CD8-positive, alpha-beta T cell (primary cell): ENCODE measurements at regions of chr3 and their contacts with region 1.

Region 1: GRCh38 chr3:172039436-172040077 is at the start of gene FNDC3B:
- DNase-seq: peak; percentile 84 to 95 (median 90)
- ATAC-seq: peak; percentile 93
- H3K4me3 ChIP-seq: peak within 1 kb of the TSS; percentile 88 to 90
- H3K4me3 Mint-ChIP-seq: peak within 1 kb of the TSS; percentile 99
- H3K27ac ChIP-seq: peak within 1 kb of the TSS; percentile 61 to 84
- H3K27ac Mint-ChIP-seq: peak within 1 kb of the TSS; percentile 97
- H3K4me1 ChIP-seq: peaks cover 20% of the 10 kb centered on the region
- H3K4me1 Mint-ChIP-seq: peaks cover 38% of the 10 kb centered on the region
- H3K27me3 ChIP-seq: no peaks in the 10 kb centered on the region
- H3K27me3 Mint-ChIP-seq: peaks cover 2% of the 10 kb centered on the region
- CTCF ChIP-seq: no peak
- total RNA-seq, gene FNDC3B: 13.2 to 14.4 TPM

Region 2: DNA sequence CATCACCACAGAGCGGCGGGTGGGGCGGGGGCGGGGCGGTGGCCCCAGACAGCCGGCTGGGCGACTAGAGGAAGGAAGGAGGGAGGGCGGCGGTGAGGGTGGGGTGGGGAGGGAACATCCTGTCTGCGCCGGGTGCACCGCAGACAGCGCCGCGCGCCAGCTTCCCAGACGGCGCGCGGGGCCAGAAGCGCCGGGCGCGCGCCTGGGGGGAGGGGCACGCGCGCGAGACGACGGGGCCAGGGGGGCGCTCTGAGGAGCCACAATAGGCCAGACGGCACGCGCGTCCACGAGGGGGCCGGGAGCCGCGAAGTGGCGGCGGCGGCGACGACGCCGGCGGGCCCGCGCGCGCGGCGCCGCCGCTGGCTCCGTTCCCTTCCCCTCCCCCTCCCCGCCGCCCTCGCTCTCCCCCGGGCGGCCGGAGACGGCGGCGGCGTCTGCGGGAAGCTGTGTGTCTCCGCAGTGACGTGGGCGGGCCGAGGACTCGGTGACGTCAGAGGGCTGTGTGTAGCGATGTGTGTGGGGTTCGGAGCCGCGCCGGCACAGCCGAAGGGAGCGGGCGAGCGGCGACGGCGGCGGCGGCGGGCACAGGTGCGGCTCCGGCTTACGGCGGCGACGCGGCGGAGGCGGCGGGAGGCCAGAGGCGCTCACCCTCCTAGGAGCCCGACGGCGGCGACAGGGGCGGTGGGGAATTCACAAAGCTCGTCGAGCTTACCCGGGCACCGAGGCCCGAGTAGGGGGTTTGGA is 1682.2 kb before region 1 on chr3 and contains the start of gene SKIL:
- CTCF ChIA-PET with region 1: no interaction called
- POLR2A ChIA-PET with region 1: no interaction called
- intact Hi-C with region 1: loop called in 1 of 2 experiments (anchors 5 kb)
- DNase-seq: peak; percentile 94 to 99 (median 97)
- ATAC-seq: peak; percentile 69
- H3K4me3 ChIP-seq: peak within 1 kb of the TSS; percentile 55 to 76
- H3K4me3 Mint-ChIP-seq: peak within 1 kb of the TSS; percentile 95
- H3K27ac ChIP-seq: peak within 1 kb of the TSS; percentile 91 to 96
- H3K27ac Mint-ChIP-seq: peak within 1 kb of the TSS; percentile 99
- H3K4me1 ChIP-seq: peaks cover 24% of the 10 kb centered on the region
- H3K4me1 Mint-ChIP-seq: peaks cover 52% of the 10 kb centered on the region
- H3K27me3 ChIP-seq: no peaks in the 10 kb centered on the region
- H3K27me3 Mint-ChIP-seq: no peaks in the 10 kb centered on the region
- CTCF ChIP-seq: no peak
- total RNA-seq, gene SKIL: 160 to 177 TPM

Region 3: DNA sequence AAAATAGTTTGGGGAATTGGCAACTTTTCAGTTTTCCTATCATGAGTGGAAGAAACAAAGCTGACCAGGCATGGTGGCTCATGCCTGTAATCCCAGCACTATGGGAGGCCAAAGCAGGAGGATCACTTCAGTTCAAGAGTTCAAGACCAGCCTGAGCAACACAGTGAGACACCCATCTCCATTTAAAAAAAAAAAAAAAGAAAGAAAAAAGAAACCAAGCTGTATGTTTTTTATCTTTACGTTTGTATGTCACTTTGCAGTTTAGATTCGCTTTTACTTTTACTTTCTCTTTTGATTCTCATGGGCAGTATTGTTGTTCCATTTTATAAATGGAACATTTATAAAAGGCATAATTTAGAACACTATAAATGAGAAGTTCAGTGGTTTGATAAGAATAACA is 548.2 kb before region 1 on chr3:
- CTCF ChIA-PET with region 1: no interaction called
- POLR2A ChIA-PET with region 1: no interaction called
- intact Hi-C with region 1: loop called in 1 of 2 experiments (anchors 10 kb)
- DNase-seq: peak in 2 of 9 experiments; percentile 31 to 61
- ATAC-seq: peak; percentile 40
- H3K4me3 ChIP-seq: peak overlapping the region; percentile 25 to 32
- H3K4me3 Mint-ChIP-seq: peak overlapping the region; percentile 50
- H3K27ac ChIP-seq: peak overlapping the region in 1 of 2 experiments; percentile 57
- H3K27ac Mint-ChIP-seq: peak overlapping the region; percentile 66
- H3K4me1 ChIP-seq: peaks cover 39% of the 10 kb centered on the region
- H3K4me1 Mint-ChIP-seq: peaks cover 47% of the 10 kb centered on the region
- H3K27me3 ChIP-seq: no peaks in the 10 kb centered on the region
- H3K27me3 Mint-ChIP-seq: no peaks in the 10 kb centered on the region
- CTCF ChIP-seq: no peak

Region 4: GRCh38 chr3:171851680-171852058 is 187.9 kb before region 1 on chr3:
- CTCF ChIA-PET with region 1: no interaction called
- POLR2A ChIA-PET with region 1: no interaction called
- intact Hi-C with region 1: no loop called
- DNase-seq: no peak
- ATAC-seq: no peak
- H3K4me3 ChIP-seq: no peak overlapping the region
- H3K4me3 Mint-ChIP-seq: no peak overlapping the region
- H3K27ac ChIP-seq: no peak overlapping the region
- H3K27ac Mint-ChIP-seq: no peak overlapping the region
- H3K4me1 ChIP-seq: no peaks in the 10 kb centered on the region
- H3K4me1 Mint-ChIP-seq: peaks cover 1% of the 10 kb centered on the region
- H3K27me3 ChIP-seq: no peaks in the 10 kb centered on the region
- H3K27me3 Mint-ChIP-seq: peaks cover 7% of the 10 kb centered on the region
- CTCF ChIP-seq: no peak

Region 5: DNA sequence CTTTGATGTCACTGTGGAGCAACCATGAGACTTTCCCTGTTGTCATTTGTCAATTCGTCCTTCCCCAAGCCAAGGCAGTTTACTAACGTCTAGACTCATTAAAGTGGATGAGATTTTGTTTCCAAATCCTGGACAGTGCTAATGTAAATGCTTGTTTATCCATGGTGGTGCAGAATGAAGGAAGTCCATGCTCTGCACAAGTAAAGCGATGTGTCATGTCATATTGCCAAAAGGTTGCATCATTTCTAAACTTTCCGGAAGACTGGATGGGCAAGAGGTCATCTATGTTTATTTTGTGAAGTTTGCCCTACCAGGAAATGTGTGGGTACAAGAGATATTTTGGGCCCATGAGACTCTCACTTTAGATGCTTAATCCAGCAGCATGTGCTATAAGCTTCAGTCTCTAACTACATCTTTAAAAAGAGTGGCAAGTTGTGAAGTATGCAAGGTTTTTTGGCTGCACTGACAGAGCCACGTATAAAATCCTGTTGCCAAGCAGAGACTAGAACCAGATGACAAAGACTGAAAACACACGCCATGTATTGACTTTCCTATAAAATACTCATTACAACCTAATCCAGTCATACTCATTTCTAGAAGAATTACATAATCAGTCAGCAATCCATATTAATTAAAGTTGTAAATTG is 72.3 kb before region 1 on chr3:
- CTCF ChIA-PET with region 1: no interaction called
- POLR2A ChIA-PET with region 1: no interaction called
- intact Hi-C with region 1: no loop called
- DNase-seq: peak in 1 of 9 experiments; percentile 22
- ATAC-seq: no peak
- H3K4me3 ChIP-seq: no peak overlapping the region
- H3K4me3 Mint-ChIP-seq: no peak overlapping the region
- H3K27ac ChIP-seq: no peak overlapping the region
- H3K27ac Mint-ChIP-seq: no peak overlapping the region
- H3K4me1 ChIP-seq: no peaks in the 10 kb centered on the region
- H3K4me1 Mint-ChIP-seq: no peaks in the 10 kb centered on the region
- H3K27me3 ChIP-seq: no peaks in the 10 kb centered on the region
- H3K27me3 Mint-ChIP-seq: no peaks in the 10 kb centered on the region
- CTCF ChIP-seq: no peak

Region 6: DNA sequence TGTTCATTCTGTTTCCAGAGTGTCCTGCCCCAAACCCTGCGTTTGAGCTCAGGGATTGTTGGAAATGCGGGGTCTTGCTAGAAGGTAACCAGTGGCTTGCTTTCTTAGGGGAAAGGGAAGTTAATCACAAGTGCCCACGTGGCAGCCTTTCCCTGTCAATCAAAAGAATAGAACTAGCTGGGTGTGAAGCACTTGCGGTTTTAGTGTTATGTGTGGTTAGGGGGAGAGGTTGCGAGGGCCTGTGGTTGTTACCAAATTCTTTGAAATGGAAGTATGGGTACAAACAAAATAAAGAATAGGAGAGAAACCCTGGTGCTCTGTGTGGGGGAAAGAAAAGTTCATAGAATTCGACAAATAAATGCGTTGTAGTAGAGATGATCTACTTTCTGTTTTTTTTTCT is 67.4 kb after region 1 on chr3:
- CTCF ChIA-PET with region 1: interaction called, 13 read pairs
- POLR2A ChIA-PET with region 1: interaction called, 11 read pairs
- intact Hi-C with region 1: loop called (anchors 1 kb)
- DNase-seq: peak; percentile 35 to 93 (median 59)
- ATAC-seq: peak; percentile 56
- H3K4me3 ChIP-seq: peak overlapping the region; percentile 25 to 28
- H3K4me3 Mint-ChIP-seq: peak overlapping the region; percentile 70
- H3K27ac ChIP-seq: peak overlapping the region; percentile 41 to 72
- H3K27ac Mint-ChIP-seq: peak overlapping the region; percentile 85
- H3K4me1 ChIP-seq: peaks cover 74% of the 10 kb centered on the region
- H3K4me1 Mint-ChIP-seq: peaks cover 81% of the 10 kb centered on the region
- H3K27me3 ChIP-seq: no peaks in the 10 kb centered on the region
- H3K27me3 Mint-ChIP-seq: no peaks in the 10 kb centered on the region
- CTCF ChIP-seq: no peak

Region 7: DNA sequence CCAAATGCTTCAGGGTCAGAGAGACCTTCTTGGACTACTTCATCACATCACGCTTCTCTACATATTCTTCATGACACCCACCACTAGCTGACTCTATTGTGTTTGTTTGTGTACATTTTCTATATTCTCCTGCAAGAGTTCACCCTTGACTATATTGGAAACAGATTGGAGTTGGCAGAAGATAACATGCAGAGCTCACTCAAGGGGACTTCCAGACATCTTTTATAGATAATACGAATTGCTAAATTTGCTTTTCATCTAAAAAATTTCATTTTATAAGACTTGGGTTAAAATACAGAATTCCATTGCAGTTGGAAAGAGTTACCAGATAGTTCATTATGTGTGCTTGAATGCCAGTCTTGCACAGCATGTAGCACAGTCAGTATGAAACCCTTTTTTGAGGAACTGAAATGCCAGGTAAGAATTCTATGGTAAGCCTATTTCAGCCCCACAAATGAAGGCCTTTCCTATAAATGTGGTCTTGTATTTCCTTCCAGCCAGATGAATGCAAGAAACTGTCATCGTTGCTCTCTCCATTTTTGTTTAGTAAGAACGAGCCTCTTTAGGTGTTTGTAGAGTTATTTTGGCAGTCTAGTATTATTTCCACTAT is 231.1 kb after region 1 on chr3:
- CTCF ChIA-PET with region 1: interaction called, 28 read pairs
- POLR2A ChIA-PET with region 1: no interaction called
- intact Hi-C with region 1: loop called (anchors 5 to 10 kb)
- DNase-seq: no peak
- ATAC-seq: no peak
- H3K4me3 ChIP-seq: no peak overlapping the region
- H3K4me3 Mint-ChIP-seq: no peak overlapping the region
- H3K27ac ChIP-seq: no peak overlapping the region
- H3K27ac Mint-ChIP-seq: no peak overlapping the region
- H3K4me1 ChIP-seq: no peaks in the 10 kb centered on the region
- H3K4me1 Mint-ChIP-seq: no peaks in the 10 kb centered on the region
- H3K27me3 ChIP-seq: no peaks in the 10 kb centered on the region
- H3K27me3 Mint-ChIP-seq: no peaks in the 10 kb centered on the region
- CTCF ChIP-seq: no peak

Region 8: GRCh38 chr3:172332256-172333041 is 292.9 kb after region 1 on chr3:
- CTCF ChIA-PET with region 1: interaction called, 31 read pairs
- POLR2A ChIA-PET with region 1: no interaction called
- intact Hi-C with region 1: loop called in 1 of 2 experiments (anchors 2 kb)
- DNase-seq: peak; percentile 4 to 71 (median 53)
- ATAC-seq: peak; percentile 81
- H3K4me3 ChIP-seq: no peak overlapping the region
- H3K4me3 Mint-ChIP-seq: no peak overlapping the region
- H3K27ac ChIP-seq: no peak overlapping the region
- H3K27ac Mint-ChIP-seq: no peak overlapping the region
- H3K4me1 ChIP-seq: no peaks in the 10 kb centered on the region
- H3K4me1 Mint-ChIP-seq: peaks cover 2% of the 10 kb centered on the region
- H3K27me3 ChIP-seq: no peaks in the 10 kb centered on the region
- H3K27me3 Mint-ChIP-seq: no peaks in the 10 kb centered on the region
- CTCF ChIP-seq: peak; percentile 79

Region 9: DNA sequence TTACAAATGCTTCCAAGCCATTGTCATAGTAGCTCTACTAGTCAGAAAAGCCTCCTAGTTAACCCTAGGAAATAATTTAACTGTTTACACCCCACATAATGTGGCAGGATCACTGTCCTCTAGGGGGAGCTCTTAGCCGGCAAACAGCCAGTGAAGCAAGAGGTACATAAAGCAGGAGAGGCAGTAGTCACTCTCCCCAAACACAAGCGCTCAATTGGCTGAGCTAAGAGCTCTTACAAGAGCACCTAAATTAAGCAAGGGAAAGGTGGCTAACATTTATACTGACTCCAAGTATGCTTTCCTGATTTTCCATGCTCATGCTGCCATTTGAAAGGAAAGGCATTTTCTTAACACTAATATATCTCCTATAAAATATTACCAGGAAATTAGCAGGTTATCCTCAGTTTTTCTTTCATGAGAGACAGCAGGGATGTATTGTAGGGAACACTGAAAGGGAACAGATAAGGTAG is 633.7 kb after region 1 on chr3:
- CTCF ChIA-PET with region 1: no interaction called
- POLR2A ChIA-PET with region 1: no interaction called
- intact Hi-C with region 1: loop called in 1 of 2 experiments (anchors 10 kb)
- DNase-seq: peak in 7 of 9 experiments; percentile 4 to 60 (median 41)
- ATAC-seq: no peak
- H3K4me3 ChIP-seq: no peak overlapping the region
- H3K4me3 Mint-ChIP-seq: no peak overlapping the region
- H3K27ac ChIP-seq: no peak overlapping the region
- H3K27ac Mint-ChIP-seq: no peak overlapping the region
- H3K4me1 ChIP-seq: no peaks in the 10 kb centered on the region
- H3K4me1 Mint-ChIP-seq: peaks cover 2% of the 10 kb centered on the region
- H3K27me3 ChIP-seq: no peaks in the 10 kb centered on the region
- H3K27me3 Mint-ChIP-seq: no peaks in the 10 kb centered on the region
- CTCF ChIP-seq: peak; percentile 39

Region 10: DNA sequence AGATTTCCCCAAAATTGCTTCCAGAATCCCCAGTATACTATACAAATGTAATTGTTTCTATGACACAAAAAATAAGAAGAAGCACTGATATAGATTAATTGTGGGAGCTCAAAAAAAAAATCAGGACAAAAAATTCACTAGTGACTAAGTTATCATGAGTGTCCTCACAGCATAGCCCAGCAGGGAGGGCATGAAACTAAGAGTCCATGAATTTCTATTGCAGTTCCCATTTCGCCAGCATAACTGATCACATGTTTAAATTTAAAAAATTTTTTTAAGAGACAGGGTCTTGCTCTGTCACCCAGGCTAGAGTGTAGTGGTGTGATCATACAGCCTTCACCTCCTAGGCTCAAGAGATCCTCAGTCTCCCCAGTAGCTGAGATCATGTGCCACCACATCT is 660.7 kb after region 1 on chr3:
- CTCF ChIA-PET with region 1: no interaction called
- POLR2A ChIA-PET with region 1: no interaction called
- intact Hi-C with region 1: no loop called
- DNase-seq: no peak
- ATAC-seq: no peak
- H3K4me3 ChIP-seq: no peak overlapping the region
- H3K4me3 Mint-ChIP-seq: no peak overlapping the region
- H3K27ac ChIP-seq: no peak overlapping the region
- H3K27ac Mint-ChIP-seq: no peak overlapping the region
- H3K4me1 ChIP-seq: no peaks in the 10 kb centered on the region
- H3K4me1 Mint-ChIP-seq: peaks cover 10% of the 10 kb centered on the region
- H3K27me3 ChIP-seq: no peaks in the 10 kb centered on the region
- H3K27me3 Mint-ChIP-seq: no peaks in the 10 kb centered on the region
- CTCF ChIP-seq: no peak